MCF 10A (cell line): ENCODE measurements at regions of chr3 and their contacts with region 1.

Region 1: GRCh38 chr3:23183734-23184133 is 19.4 kb upstream of the UBE2E2 start:
- DNase-seq: peak; percentile 79
- H3K4me3 Mint-ChIP-seq: no peak overlapping the region
- H3K27ac Mint-ChIP-seq: no peak overlapping the region
- H3K4me1 Mint-ChIP-seq: no peaks in the 10 kb centered on the region
- H3K27me3 Mint-ChIP-seq: no peaks in the 10 kb centered on the region
- CTCF ChIP-seq: peak; percentile 64

Region 2: DNA sequence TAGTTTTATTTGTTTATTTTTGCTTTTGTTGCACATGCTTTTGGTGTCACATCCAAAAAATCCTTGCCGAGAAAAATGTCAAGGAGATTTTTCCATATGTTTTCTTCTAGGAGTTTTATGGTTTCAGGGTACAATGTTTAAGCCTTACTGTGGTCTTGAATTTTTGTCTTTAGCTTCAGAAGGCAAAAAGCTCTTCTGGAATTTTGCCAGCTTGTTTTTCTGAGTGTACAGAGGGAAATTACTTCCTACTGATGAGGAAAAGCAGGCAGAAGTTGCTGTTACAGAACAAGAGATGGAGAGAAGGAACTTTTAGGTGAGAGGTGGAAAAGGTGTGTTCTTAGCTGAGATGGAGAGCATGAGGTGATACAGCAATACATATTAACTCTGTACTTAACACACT is 79.0 kb after region 1 on chr3:
- CTCF ChIA-PET with region 1: no interaction called
- POLR2A ChIA-PET with region 1: no interaction called
- intact Hi-C with region 1: no loop called
- DNase-seq: no peak
- H3K4me3 Mint-ChIP-seq: no peak overlapping the region
- H3K27ac Mint-ChIP-seq: peak overlapping the region; percentile 61
- H3K4me1 Mint-ChIP-seq: peaks cover 25% of the 10 kb centered on the region
- H3K27me3 Mint-ChIP-seq: no peaks in the 10 kb centered on the region
- CTCF ChIP-seq: no peak

Region 3: GRCh38 chr3:23685484-23686258 is 501.9 kb after region 1 on chr3:
- CTCF ChIA-PET with region 1: no interaction called
- POLR2A ChIA-PET with region 1: no interaction called
- intact Hi-C with region 1: loop called (anchors 5 kb)
- DNase-seq: peak; percentile 100
- H3K4me3 Mint-ChIP-seq: peak overlapping the region; percentile 24
- H3K27ac Mint-ChIP-seq: peak overlapping the region; percentile 77
- H3K4me1 Mint-ChIP-seq: peaks cover 15% of the 10 kb centered on the region
- H3K27me3 Mint-ChIP-seq: no peaks in the 10 kb centered on the region
- CTCF ChIP-seq: no peak